H1 (cell line): ENCODE measurements at regions of chr4 and their contacts with region 1.

Region 1: DNA sequence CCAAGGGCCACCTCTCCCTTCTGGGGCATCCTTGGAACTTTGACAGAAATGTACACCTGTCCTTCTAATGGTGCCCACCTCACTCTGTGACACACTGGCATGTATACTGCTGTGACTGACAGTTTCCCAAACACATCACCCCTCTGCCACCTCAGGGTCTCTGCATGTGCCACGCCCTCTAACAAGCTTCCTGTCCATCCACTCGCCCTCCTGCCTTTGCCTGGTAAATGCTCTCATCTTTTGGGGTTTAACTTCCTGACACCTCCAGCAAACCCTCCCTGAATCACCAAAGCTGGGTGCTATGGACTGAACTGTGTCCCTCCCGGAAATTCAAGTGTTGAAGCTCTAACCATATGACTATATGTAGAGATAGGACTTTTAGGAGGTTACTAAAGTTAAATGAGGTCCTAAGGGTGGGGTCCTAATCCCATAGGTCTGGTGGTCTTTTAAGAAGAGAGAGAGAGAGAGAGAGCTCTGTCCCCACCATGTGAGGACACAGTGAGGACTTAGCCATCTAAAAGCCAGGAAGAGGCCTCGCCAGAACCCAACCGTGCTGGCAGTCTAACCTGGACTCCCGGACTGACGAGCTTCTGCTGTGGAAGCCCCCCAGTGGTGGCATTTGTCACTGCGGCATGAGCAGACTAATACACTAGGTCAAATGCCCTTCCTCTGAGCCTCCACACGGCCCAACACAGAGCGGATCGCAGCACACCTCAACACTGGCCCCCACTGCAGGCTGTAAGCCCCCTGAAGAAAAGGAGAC is 95.6 kb downstream of the AFAP1 start:
- DNase-seq: peak; percentile 63 to 90
- H3K4me3 ChIP-seq: no peak overlapping the region
- H3K27ac ChIP-seq: no peak overlapping the region
- H3K4me1 ChIP-seq: peaks cover 0 to 3% (median 3%) of the 10 kb centered on the region in 4 experiments; a peak in 4 of 7 replicates
- H3K27me3 ChIP-seq: no peaks in the 10 kb centered on the region
- CTCF ChIP-seq: peak; percentile 80 to 85 (median 84)
- EP300 ChIP-seq: no peak
- POLR2A ChIP-seq: no peak
- RAD21 ChIP-seq: peak; percentile 53 to 71

Region 2: DNA sequence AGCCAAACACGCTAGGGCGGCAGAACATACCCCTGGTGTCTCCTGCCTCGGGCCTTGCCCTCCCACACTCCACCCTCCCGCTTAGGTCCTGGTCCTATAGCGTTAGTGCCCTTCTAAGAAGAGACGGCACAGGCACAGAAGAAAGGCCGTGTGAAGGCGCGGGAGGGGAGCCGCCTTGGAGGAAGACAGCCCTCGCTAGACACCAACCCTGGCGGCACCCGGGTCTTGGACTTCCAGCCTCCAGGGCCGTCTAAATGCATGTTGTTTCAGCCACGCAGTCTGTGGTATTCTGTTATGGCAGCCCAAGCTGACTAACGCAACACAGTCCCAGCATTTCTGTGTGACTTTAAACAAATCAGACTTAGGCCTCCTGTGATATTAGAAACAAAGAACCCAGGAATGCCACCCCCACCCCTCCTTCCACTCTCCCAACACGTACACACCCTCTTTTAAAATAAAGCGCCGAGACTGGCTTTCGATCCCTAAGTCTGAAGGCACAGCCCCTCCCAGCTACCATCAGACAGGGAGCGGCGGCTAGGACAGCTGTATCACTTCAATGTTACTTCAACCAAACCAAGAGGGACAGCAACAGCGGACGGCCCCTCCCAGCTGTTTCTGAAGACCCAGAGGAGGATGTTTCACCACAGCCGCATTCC is 32.3 kb before region 1 on chr4:
- CTCF ChIA-PET with region 1: interaction called, 105 read pairs
- POLR2A ChIA-PET with region 1: interaction called, 3 read pairs
- DNase-seq: no peak
- H3K4me3 ChIP-seq: no peak overlapping the region
- H3K27ac ChIP-seq: no peak overlapping the region
- H3K4me1 ChIP-seq: peaks cover 2 to 19% (median 11%) of the 10 kb centered on the region in 4 experiments
- H3K27me3 ChIP-seq: no peaks in the 10 kb centered on the region
- CTCF ChIP-seq: no peak
- EP300 ChIP-seq: no peak
- POLR2A ChIP-seq: no peak
- RAD21 ChIP-seq: no peak

Region 3: GRCh38 chr4:7827991-7828720 is 15.9 kb before region 1 on chr4:
- CTCF ChIA-PET with region 1: interaction called, 33 read pairs
- POLR2A ChIA-PET with region 1: interaction called, 3 read pairs
- DNase-seq: no peak
- H3K4me3 ChIP-seq: no peak overlapping the region
- H3K27ac ChIP-seq: no peak overlapping the region
- H3K4me1 ChIP-seq: peaks cover 0 to 9% (median 5%) of the 10 kb centered on the region in 4 experiments; a peak in 4 of 7 replicates
- H3K27me3 ChIP-seq: no peaks in the 10 kb centered on the region
- CTCF ChIP-seq: no peak
- EP300 ChIP-seq: no peak
- POLR2A ChIP-seq: no peak
- RAD21 ChIP-seq: no peak

Region 4: DNA sequence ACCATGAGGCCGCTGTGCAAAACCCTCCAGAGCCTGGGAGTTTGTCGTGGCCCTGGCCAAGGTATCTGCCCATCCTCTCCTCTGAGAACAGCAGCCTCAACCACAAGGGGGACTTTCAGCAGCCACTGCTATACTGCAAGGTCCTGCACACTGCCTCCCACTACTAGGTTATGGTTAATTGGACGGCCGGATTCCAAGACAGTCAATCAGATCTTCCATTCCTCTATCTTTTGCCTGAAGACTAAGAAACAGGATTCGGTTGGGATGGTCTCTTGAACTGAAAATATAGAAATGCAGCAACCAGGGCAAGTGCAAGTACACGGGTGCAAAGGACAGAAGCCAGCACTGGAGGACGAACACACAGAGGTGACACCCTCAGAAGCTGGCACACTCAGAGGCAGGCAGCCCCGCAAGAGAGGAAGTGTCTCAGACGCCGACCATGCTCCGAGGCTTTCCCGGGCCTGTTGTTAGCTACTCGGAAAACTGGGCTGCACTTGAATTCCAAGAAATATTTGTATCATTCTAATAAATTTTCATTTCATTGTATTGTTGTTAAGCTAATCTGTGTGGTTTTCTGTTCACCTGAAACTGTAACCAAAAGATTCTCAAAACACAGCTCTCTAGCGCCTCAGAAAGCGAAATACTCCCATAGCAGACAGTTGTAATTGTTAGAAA is 32.3 kb after region 1 on chr4:
- CTCF ChIA-PET with region 1: interaction called, 46 read pairs
- POLR2A ChIA-PET with region 1: no interaction called
- DNase-seq: no peak
- H3K4me3 ChIP-seq: no peak overlapping the region
- H3K27ac ChIP-seq: no peak overlapping the region
- H3K4me1 ChIP-seq: peaks cover 0 to 3% (median 0%) of the 10 kb centered on the region in 4 experiments; a peak in 1 of 7 replicates
- H3K27me3 ChIP-seq: no peaks in the 10 kb centered on the region
- CTCF ChIP-seq: peak; percentile 39 to 62 (median 42); a peak in 3 of 4 replicates
- EP300 ChIP-seq: no peak
- POLR2A ChIP-seq: no peak
- RAD21 ChIP-seq: peak; percentile 34 to 58; a peak in 3 of 4 replicates

Region 5: GRCh38 chr4:7929118-7929951 is 85.3 kb after region 1 on chr4:
- CTCF ChIA-PET with region 1: interaction called, 34 read pairs
- POLR2A ChIA-PET with region 1: no interaction called
- DNase-seq: peak in 1 of 2 experiments; percentile 25
- H3K4me3 ChIP-seq: no peak overlapping the region
- H3K27ac ChIP-seq: no peak overlapping the region
- H3K4me1 ChIP-seq: peaks cover 6 to 12% (median 10%) of the 10 kb centered on the region in 4 experiments; a peak in 6 of 7 replicates
- H3K27me3 ChIP-seq: no peaks in the 10 kb centered on the region
- CTCF ChIP-seq: peak in 2 of 3 experiments; percentile 30 to 39; a peak in 2 of 4 replicates
- EP300 ChIP-seq: peak in 1 of 2 experiments; percentile 36; a peak in 1 of 3 replicates
- POLR2A ChIP-seq: no peak
- RAD21 ChIP-seq: peak; percentile 53 to 65